ENCODE measurements at regions of chr6 and their contacts with region 1.

Region 1: GRCh38 chr6:132813173-132813856 is 1.1 kb upstream of the RPS12 start:
- DNase-seq: peak; percentile 65
- H3K4me3 ChIP-seq: peak overlapping the region; percentile 93
- H3K27ac ChIP-seq: peak overlapping the region; percentile 88
- H3K4me1 ChIP-seq: peaks cover 39% of the 10 kb centered on the region
- CTCF ChIP-seq: no peak

Region 2: DNA sequence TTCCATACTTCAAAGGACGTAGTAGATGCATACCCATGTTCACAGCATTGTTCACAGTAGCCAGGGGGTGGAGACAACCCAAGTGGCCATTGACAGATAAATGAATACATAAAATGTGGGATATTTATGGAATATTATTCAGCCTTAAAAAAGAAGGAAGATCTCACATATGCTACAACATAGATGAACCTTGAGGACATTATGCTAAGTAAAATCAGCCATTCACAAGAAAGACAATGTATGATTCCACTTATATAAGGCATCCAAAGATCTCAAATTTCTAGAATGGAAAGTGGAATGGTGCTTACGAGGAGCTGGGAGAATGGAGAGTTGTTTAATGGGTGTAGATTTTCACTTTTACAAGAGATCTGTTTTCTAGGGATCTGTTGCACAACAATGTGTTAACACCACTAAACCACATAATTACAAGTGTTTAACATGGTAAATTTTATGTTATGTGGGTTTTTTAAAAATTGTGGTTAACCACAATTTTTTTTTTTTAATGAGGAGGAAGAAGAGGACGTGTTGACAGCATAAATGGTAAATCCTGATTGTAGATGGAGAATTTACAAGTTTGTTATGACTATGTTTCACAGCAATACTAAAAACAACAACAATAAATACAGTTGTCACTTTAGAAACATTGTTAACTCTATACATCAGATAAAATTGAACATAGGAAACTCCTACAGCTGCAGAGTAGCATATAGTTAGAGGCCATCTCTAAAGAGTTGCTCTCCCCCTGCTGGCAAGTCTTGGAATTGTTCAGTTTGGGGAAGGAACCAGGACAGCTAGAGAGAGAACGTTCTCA is 903.7 kb before region 1 on chr6:
- CTCF ChIA-PET with region 1: no interaction called
- POLR2A ChIA-PET with region 1: no interaction called
- intact Hi-C with region 1: loop called (anchors 10 kb)
- DNase-seq: peak; percentile 79
- H3K4me3 ChIP-seq: no peak overlapping the region
- H3K27ac ChIP-seq: no peak overlapping the region
- H3K4me1 ChIP-seq: peaks cover 6% of the 10 kb centered on the region
- CTCF ChIP-seq: peak; percentile 94

Region 3: DNA sequence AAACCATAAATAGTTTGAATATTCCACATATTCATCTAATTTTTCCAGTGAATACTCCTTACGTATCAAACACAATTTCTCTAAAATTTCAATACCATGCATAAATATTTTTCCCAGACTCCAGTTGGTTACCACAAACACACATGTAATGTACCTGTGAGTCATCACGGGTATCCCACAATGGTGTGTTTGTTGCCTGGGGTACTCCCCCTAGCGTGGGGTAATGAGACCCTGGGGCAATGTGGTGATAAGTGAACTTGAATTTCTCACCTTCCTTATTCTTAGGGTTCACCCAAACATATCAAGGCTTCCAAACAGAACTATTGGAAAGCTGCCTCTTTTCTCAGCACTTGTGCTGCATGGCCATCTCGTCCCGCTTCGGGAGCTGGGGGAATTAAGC is 351.4 kb before region 1 on chr6:
- CTCF ChIA-PET with region 1: no interaction called
- POLR2A ChIA-PET with region 1: no interaction called
- intact Hi-C with region 1: no loop called
- DNase-seq: no peak
- H3K4me3 ChIP-seq: no peak overlapping the region
- H3K27ac ChIP-seq: no peak overlapping the region
- H3K4me1 ChIP-seq: peaks cover 26% of the 10 kb centered on the region
- CTCF ChIP-seq: no peak

Region 4: GRCh38 chr6:132498638-132499037 is 314.7 kb before region 1 on chr6:
- CTCF ChIA-PET with region 1: no interaction called
- POLR2A ChIA-PET with region 1: interaction called, 6 read pairs
- intact Hi-C with region 1: loop called (anchors 5 kb)
- DNase-seq: peak; percentile 81
- H3K4me3 ChIP-seq: peak overlapping the region; percentile 24
- H3K27ac ChIP-seq: peak overlapping the region; percentile 100
- H3K4me1 ChIP-seq: peaks cover 90% of the 10 kb centered on the region
- CTCF ChIP-seq: no peak

Region 5: GRCh38 chr6:132760256-132760655 is 53.1 kb before region 1 on chr6:
- CTCF ChIA-PET with region 1: no interaction called
- POLR2A ChIA-PET with region 1: interaction called, 25 read pairs
- intact Hi-C with region 1: loop called (anchors 2 kb)
- DNase-seq: peak; percentile 27
- H3K4me3 ChIP-seq: peak overlapping the region; percentile 23
- H3K27ac ChIP-seq: peak overlapping the region; percentile 37
- H3K4me1 ChIP-seq: peaks cover 80% of the 10 kb centered on the region
- CTCF ChIP-seq: no peak

Region 6: DNA sequence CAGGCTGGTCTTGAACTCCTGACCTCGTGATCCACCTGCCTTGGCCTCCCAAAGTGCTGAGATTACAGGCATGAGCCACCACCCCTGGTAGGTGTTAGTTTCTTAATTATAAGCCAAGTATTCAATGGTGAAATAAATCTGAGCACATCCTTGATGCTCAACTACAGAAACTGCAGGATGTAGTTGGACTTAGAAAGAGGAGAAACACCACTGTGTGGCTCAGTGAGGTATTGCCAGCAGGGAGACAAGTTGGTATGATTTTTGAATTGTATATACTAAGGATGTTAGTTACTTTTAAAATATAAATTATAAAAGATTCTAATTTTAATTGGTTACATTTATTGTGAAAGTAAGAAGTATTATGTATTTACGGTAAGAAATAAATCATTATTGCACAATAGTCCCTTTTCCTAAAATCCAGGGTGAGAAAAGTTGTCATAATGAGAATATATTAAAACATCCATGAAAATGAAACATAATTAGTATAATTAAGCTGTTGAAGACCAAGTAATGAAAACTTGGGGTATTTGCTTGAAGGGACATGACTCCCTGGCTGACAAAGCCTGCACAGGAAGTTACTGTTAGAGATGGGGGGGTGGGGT is 32.4 kb before region 1 on chr6:
- CTCF ChIA-PET with region 1: no interaction called
- POLR2A ChIA-PET with region 1: interaction called, 11 read pairs
- intact Hi-C with region 1: no loop called
- DNase-seq: peak; percentile 54
- H3K4me3 ChIP-seq: no peak overlapping the region
- H3K27ac ChIP-seq: no peak overlapping the region
- H3K4me1 ChIP-seq: no peaks in the 10 kb centered on the region
- CTCF ChIP-seq: peak; percentile 70

Region 7: GRCh38 chr6:132830334-132830751 is 17.0 kb after region 1 on chr6:
- CTCF ChIA-PET with region 1: no interaction called
- POLR2A ChIA-PET with region 1: interaction called, 14 read pairs
- intact Hi-C with region 1: no loop called
- DNase-seq: peak; percentile 25
- H3K4me3 ChIP-seq: no peak overlapping the region
- H3K27ac ChIP-seq: no peak overlapping the region
- H3K4me1 ChIP-seq: no peaks in the 10 kb centered on the region
- CTCF ChIP-seq: peak; percentile 75

Region 8: GRCh38 chr6:132887204-132887603 is 73.9 kb after region 1 on chr6:
- CTCF ChIA-PET with region 1: no interaction called
- POLR2A ChIA-PET with region 1: no interaction called
- intact Hi-C with region 1: no loop called
- DNase-seq: no peak
- H3K4me3 ChIP-seq: no peak overlapping the region
- H3K27ac ChIP-seq: no peak overlapping the region
- H3K4me1 ChIP-seq: no peaks in the 10 kb centered on the region
- CTCF ChIP-seq: no peak